Aorta (tissue), 5 donors: ENCODE measurements at regions of chr18 and their contacts with region 1.

Region 1: DNA sequence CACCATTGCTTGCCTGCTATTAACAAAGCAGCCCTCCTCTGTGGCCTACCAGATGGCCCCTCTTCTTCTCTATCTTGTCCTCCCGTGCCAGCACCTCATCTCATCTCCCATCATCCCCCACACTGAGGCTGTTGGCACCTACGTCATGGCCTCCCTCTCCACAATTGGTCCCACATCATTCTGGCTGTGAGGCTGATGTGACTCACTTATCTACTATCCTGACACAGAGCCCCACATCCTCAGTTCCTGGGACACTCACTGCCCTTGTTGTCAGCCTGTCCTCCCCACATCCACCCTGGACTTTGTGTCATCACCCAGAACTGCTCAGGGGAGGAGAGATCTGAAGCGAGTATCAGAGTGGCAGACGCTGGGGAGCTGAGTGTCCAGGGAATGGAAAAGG is 102.9 kb downstream of the MRO start:
- DNase-seq: no peak
- ATAC-seq: no peak
- H3K4me3 ChIP-seq: no peak overlapping the region
- H3K27ac ChIP-seq: no peak overlapping the region
- H3K4me1 ChIP-seq: no peaks in the 10 kb centered on the region
- H3K27me3 ChIP-seq: no peaks in the 10 kb centered on the region

Region 2: DNA sequence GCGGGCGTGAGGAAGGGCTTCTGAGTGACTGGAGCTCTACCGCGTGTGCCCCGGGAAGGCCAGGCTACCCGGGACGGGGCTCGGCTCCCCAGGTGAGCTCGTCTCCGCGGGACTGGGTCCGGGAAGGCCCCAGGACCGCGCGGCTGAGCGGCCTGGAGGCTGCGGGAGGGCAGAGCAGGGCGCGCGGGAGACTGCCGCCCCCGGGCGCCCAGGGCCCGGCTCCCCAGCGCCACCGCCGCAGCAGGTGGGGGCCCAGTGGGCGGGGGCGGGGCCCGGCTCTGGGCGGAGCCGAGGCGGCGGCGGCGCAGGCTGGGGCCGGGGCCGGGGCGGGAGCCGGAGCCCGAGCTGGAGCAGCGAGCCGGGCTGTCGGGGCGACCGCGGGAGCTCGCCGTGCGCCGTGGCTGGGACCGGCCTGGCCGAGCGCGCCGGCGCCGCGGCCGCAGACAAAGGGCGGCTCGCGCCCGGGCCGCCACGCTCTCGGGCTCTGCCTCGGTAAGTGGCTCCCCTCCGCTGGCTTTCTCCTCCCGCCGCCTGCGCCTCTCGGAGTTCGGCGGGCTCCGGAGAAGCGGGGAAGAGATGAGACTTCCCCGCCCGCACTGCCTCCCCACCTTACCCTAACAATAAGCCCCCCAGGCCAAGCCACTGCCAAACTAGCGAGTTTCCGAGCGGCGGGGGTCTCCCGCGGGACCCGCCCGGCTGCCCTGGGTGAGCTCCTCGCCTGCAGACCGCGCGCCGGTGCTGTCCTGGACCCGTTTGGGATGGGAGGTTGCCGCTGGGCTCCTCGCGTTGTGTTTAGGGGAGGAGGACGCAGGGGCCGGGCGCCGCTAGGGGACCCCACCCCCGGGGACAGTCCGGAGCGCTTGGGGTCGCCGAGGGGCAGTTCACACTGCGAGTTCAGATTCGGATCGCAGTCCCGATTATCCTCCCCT is 156.9 kb before region 1 on chr18 and contains the start of gene MAPK4:
- intact Hi-C with region 1: loop called in 1 of 2 experiments (anchors 10 kb)
- DNase-seq: peak in 1 of 2 donors; percentile 83
- ATAC-seq: peak; percentile 89
- H3K4me3 ChIP-seq: peak within 1 kb of the TSS; percentile 31 to 90
- H3K27ac ChIP-seq: peak within 1 kb of the TSS; percentile 3 to 52
- H3K4me1 ChIP-seq: no peaks in the 10 kb centered on the region
- H3K27me3 ChIP-seq: no peaks in the 10 kb centered on the region
- total RNA-seq, gene MAPK4: 1.7 to 4.2 TPM

Region 3: GRCh38 chr18:50961974-50962373 is 245.1 kb after region 1 on chr18:
- intact Hi-C with region 1: no loop called
- DNase-seq: no peak
- ATAC-seq: no peak
- H3K4me3 ChIP-seq: no peak overlapping the region
- H3K27ac ChIP-seq: no peak overlapping the region
- H3K4me1 ChIP-seq: no peaks in the 10 kb centered on the region
- H3K27me3 ChIP-seq: no peaks in the 10 kb centered on the region